Activated CD4-positive, alpha-beta T cell treated with anti-CD3 and anti-CD28 coated beads, Interleukin-2, amount 10 ng/mL, durations not matched to agents 24 days and 14 days (primary cell): ENCODE measurements at regions of chr17 and their contacts with region 1.

Region 1: DNA sequence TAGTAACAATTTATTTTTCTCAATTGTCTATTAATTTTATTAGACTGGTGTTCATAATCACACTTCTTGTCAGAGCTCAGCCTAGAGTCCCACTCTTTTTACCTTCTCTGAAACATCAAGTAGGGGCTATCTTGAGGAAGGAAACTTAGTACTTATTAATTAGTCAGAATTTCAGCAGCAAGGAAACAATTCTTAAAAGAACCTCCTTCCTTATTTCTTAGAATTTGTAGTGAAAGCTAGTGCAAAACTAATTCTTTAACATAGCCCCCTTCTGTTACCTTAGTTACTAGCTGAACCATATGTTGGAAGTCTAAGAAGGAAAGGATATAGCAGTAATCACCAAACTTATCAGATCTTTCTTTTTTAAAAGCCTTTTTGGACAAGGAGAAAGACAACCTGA is 35.2 kb downstream of the MAP2K4 start:
- DNase-seq: no peak
- H3K4me3 Mint-ChIP-seq: peak overlapping the region; percentile 26
- H3K27ac Mint-ChIP-seq: peak overlapping the region; percentile 41
- H3K4me1 Mint-ChIP-seq: peaks cover 41% of the 10 kb centered on the region
- H3K27me3 Mint-ChIP-seq: no peaks in the 10 kb centered on the region

Region 2: GRCh38 chr17:11705111-11705510 is 350.8 kb before region 1 on chr17:
- intact Hi-C with region 1: no loop called
- DNase-seq: no peak
- H3K4me3 Mint-ChIP-seq: no peak overlapping the region
- H3K27ac Mint-ChIP-seq: no peak overlapping the region
- H3K4me1 Mint-ChIP-seq: no peaks in the 10 kb centered on the region
- H3K27me3 Mint-ChIP-seq: no peaks in the 10 kb centered on the region

Region 3: DNA sequence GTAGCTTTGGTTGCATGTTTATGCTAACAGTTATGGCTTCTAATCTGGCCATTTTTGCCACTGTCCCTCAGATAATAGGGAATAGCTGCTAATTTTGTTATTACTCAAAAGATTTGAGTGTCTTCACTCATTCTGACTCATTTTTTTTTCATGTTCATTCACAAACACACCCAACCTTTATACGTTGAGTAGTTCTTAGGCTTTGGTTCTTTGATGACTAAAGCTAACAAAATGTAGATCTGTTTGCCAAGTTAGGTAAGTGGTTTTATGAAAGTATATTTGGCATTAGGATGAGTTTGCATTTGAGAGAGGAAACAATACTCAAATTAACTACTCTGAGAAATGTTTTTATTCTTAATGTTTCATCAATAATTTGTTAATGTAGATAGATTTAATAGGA is 31.6 kb before region 1 on chr17:
- intact Hi-C with region 1: no loop called
- DNase-seq: no peak
- H3K4me3 Mint-ChIP-seq: no peak overlapping the region
- H3K27ac Mint-ChIP-seq: no peak overlapping the region
- H3K4me1 Mint-ChIP-seq: peaks cover 35% of the 10 kb centered on the region
- H3K27me3 Mint-ChIP-seq: peaks cover 7% of the 10 kb centered on the region

Region 4: GRCh38 chr17:12041316-12041715 is 14.6 kb before region 1 on chr17:
- intact Hi-C with region 1: loop called (anchors 2 kb)
- DNase-seq: no peak
- H3K4me3 Mint-ChIP-seq: no peak overlapping the region
- H3K27ac Mint-ChIP-seq: no peak overlapping the region
- H3K4me1 Mint-ChIP-seq: peaks cover 13% of the 10 kb centered on the region
- H3K27me3 Mint-ChIP-seq: no peaks in the 10 kb centered on the region

Region 5: DNA sequence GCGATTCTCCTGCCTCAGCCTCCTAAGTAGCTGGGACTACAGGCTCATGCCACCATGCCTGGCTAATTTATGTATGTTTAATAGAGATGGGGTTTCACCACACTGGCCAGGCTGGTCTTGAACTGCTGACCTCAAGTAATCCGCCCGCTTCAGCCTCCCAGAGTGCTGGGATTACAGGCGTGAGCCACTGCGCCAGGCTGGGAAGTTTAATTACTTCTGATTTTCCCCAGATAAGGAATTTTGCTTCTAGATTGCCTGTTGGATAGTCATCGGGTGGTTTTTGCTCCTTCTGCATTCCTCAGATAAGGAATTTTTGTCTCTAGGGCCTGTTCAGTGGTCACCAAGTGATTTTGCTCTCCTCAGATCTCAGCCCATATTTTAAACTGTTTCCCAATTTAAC is 77.3 kb after region 1 on chr17:
- intact Hi-C with region 1: no loop called
- DNase-seq: no peak
- H3K4me3 Mint-ChIP-seq: no peak overlapping the region
- H3K27ac Mint-ChIP-seq: no peak overlapping the region
- H3K4me1 Mint-ChIP-seq: no peaks in the 10 kb centered on the region
- H3K27me3 Mint-ChIP-seq: no peaks in the 10 kb centered on the region